ENCODE measurements at regions of chr4 and their contacts with region 1.

Region 1: GRCh38 chr4:152385551-152385950 is 150.3 kb downstream of the FBXW7 start:
- DNase-seq: no peak
- ATAC-seq: peak; percentile 49 to 72 (median 68)
- H3K4me3 ChIP-seq: no peak overlapping the region
- H3K27ac ChIP-seq: no peak overlapping the region
- H3K4me1 ChIP-seq: no peaks in the 10 kb centered on the region
- H3K27me3 ChIP-seq: no peaks in the 10 kb centered on the region
- CTCF ChIP-seq: peak; percentile 75

Region 2: GRCh38 chr4:151760712-151761527 is 624.6 kb before region 1 on chr4 and contains the start of gene GATB:
- intact Hi-C with region 1: loop called in 1 of 2 experiments (anchors 10 kb)
- DNase-seq: peak; percentile 91 to 95
- ATAC-seq: peak; percentile 100
- H3K4me3 ChIP-seq: peak within 1 kb of the TSS; percentile 77
- H3K27ac ChIP-seq: peak within 1 kb of the TSS; percentile 76
- H3K4me1 ChIP-seq: peaks cover 5% of the 10 kb centered on the region
- H3K27me3 ChIP-seq: no peaks in the 10 kb centered on the region
- CTCF ChIP-seq: peak; percentile 57
- total RNA-seq, gene GATB: 22.8 to 36.6 (median 28.7) TPM

Region 3: DNA sequence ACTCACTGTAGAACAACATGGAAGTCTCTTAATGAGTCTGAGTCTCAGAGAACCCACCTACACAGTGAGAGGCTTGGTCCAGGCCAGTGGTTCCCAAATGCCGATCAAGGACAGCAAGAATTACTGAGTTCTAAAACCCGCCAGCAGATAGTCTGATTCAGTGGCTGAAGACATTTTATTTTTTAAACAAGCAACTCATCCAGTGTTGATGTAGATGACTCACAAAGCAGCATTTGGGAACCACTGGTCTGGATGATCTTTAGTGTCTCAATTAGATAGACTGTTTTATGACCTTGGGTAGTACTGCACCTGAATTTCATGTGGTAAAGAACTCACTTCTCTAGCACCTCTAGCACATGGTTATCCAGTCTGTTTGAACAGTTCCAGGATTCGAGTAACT is 43.3 kb before region 1 on chr4:
- intact Hi-C with region 1: no loop called
- DNase-seq: no peak
- ATAC-seq: peak; percentile 58 to 79 (median 69)
- H3K4me3 ChIP-seq: no peak overlapping the region
- H3K27ac ChIP-seq: peak overlapping the region; percentile 7
- H3K4me1 ChIP-seq: peaks cover 8% of the 10 kb centered on the region
- H3K27me3 ChIP-seq: no peaks in the 10 kb centered on the region
- CTCF ChIP-seq: no peak

Region 4: DNA sequence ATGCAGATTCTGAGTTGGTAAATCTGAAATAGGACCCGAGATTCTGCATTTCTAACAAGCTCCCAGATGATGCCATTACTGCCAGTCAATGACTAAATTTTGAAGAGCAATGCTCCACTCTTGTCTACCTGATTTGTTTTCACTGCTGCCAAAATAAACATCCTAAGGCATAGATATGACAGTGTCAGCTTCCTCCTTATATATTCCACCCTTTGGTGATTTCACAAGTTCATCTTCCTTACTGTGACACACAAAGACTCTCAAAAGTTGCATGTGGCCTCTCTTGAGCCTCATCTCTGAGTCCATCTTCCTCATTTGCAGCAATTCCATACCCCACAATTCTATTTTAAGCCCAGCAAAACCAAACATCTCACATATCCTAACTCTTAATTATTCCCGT is 39.4 kb after region 1 on chr4:
- intact Hi-C with region 1: no loop called
- DNase-seq: no peak
- ATAC-seq: no peak
- H3K4me3 ChIP-seq: no peak overlapping the region
- H3K27ac ChIP-seq: no peak overlapping the region
- H3K4me1 ChIP-seq: no peaks in the 10 kb centered on the region
- H3K27me3 ChIP-seq: no peaks in the 10 kb centered on the region
- CTCF ChIP-seq: no peak

Measured in psoas muscle (tissue), 8 donors.